ENCODE measurements at regions of chr14 and their contacts with region 1.

Region 1: DNA sequence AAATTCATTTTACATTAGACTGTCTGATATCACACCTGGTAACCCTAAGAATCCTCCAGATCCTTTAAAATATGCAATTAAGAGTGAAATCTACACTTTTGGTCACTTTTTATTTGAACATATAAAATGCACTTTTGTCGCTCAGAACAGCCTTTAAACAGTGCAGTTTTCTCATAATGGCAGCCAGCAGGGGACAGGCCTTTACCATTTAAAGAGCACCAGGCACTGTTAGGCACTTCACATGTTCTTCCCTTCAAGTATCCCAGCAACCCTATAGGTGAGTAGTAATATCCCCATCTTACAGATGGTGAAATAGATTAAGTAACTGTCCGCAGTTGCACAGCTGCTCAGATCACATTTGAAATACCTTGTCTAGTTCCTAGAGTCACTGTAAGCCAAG is 11.3 kb upstream of the SAMD4A start:
- DNase-seq: no peak
- CTCF ChIP-seq: no peak

Region 2: GRCh38 chr14:54472315-54472714 is 83.3 kb before region 1 on chr14:
- in situ Hi-C with region 1: no loop called
- DNase-seq: no peak
- CTCF ChIP-seq: no peak

Region 3: DNA sequence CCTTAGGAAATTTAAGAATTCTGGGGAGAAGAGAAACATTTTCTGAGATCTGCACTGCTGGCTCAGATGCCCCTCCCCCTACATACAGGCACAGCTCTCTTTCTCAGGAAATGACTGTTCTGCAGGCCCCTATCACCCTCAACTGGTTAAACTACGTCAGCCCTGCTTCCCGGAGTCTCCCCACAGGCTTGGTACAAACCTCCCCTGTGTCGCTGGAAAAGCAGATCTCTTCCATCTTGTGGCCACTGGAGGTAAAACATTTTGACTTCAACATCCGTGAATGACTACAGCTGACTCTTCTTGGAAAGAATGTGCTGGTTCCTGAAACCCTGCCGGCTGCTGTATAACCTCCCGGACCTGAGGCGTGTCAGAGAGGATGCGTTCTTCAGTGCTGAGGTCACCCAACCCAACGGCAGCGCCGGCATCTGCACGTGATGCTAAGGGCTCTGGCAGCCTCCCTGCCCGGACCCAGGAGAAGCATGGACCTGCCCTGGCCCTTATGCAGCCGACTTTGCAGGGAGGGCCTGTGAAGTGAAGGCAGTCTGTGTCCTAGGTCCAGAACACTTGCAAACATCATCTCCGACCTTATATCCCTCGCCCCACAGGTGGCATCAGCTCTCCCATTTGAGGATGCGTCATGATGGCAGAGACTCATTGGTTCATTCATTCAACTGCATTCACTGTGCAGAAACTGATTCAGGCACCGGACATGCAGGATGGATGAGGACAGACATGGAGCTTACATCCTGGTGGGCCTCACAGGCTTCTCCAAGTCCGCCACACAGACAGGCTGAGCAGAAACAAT is 217.7 kb after region 1 on chr14:
- in situ Hi-C with region 1: loop called (anchors 10 kb)
- DNase-seq: peak; percentile 84
- CTCF ChIP-seq: peak; percentile 46

Measured in GM13977 (cell line).